GM12878 (cell line): ENCODE measurements at regions of chr13 and their contacts with region 1.

Region 1: GRCh38 chr13:29508130-29508875 is 87.2 kb downstream of the SLC7A1 start:
- DNase-seq: no peak
- ATAC-seq: peak; percentile 94
- H3K4me3 ChIP-seq: no peak overlapping the region
- H3K27ac ChIP-seq: no peak overlapping the region
- H3K4me1 ChIP-seq: no peaks in the 10 kb centered on the region
- H3K27me3 ChIP-seq: no peaks in the 10 kb centered on the region
- CTCF ChIP-seq: peak; percentile 86 to 98 (median 98)
- EP300 ChIP-seq: no peak
- POLR2A ChIP-seq: peak; percentile 67
- RAD21 ChIP-seq: peak; percentile 91

Region 2: GRCh38 chr13:29496240-29496712 is 12.0 kb before region 1 on chr13:
- CTCF ChIA-PET with region 1: interaction called, 31 read pairs
- POLR2A ChIA-PET with region 1: no interaction called
- RAD21 ChIA-PET with region 1: interaction called, 5 read pairs
- SMC1A ChIA-PET with region 1: interaction called, 3 read pairs
- in situ Hi-C with region 1: no loop called
- intact Hi-C with region 1: no loop called
- DNase-seq: no peak
- ATAC-seq: peak; percentile 83
- H3K4me3 ChIP-seq: no peak overlapping the region
- H3K27ac ChIP-seq: no peak overlapping the region
- H3K4me1 ChIP-seq: peaks cover 7% of the 10 kb centered on the region
- H3K27me3 ChIP-seq: no peaks in the 10 kb centered on the region
- CTCF ChIP-seq: no peak
- EP300 ChIP-seq: no peak
- POLR2A ChIP-seq: no peak
- RAD21 ChIP-seq: no peak

Region 3: GRCh38 chr13:29702912-29703351 is 194.6 kb after region 1 on chr13:
- CTCF ChIA-PET with region 1: interaction called, 80 read pairs
- POLR2A ChIA-PET with region 1: no interaction called
- RAD21 ChIA-PET with region 1: interaction called, 24 read pairs
- SMC1A ChIA-PET with region 1: interaction called, 17 read pairs
- in situ Hi-C with region 1: no loop called
- intact Hi-C with region 1: loop called (anchors 1 kb)
- DNase-seq: no peak
- ATAC-seq: no peak
- H3K4me3 ChIP-seq: no peak overlapping the region
- H3K27ac ChIP-seq: no peak overlapping the region
- H3K4me1 ChIP-seq: no peaks in the 10 kb centered on the region
- H3K27me3 ChIP-seq: peaks cover 2 to 5% of the 10 kb centered on the region in 2 experiments; a peak in 3 of 4 replicates
- CTCF ChIP-seq: no peak
- EP300 ChIP-seq: no peak
- POLR2A ChIP-seq: no peak
- RAD21 ChIP-seq: no peak

Region 4: DNA sequence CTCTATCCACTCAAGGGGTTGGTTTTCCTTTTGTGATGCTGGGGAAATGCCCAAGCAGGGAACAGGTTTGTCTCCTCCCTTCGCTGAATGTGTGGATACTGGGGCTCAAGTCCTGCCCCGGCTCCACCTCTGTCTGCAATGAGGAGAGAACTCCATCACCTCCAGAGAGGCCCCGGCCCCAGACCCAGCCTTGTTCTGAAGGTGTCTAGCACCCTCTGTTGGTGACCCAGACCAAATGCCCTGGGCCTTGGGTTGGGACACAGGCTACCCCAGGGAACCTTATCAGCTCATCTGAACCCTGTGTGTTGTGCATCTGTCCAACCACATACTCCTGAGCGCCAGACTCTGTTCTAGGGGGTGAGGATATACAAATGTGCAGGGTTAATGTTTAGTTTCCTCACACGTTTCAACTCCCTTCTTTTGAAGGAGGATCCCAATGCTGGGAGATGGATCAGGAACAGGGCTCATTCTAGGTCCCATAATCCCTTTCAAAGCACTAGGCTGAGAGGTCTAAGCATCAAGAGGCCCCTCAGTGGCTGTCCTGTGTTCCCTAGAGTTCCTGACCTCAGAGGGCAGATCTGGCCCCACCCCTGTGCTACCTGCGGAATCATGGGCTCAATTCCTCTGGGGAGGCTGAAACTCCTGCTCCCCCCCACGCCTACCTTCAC is 199.7 kb after region 1 on chr13:
- CTCF ChIA-PET with region 1: interaction called, 80 read pairs
- POLR2A ChIA-PET with region 1: no interaction called
- RAD21 ChIA-PET with region 1: interaction called, 24 read pairs
- SMC1A ChIA-PET with region 1: interaction called, 17 read pairs
- in situ Hi-C with region 1: loop called (anchors 5 kb)
- intact Hi-C with region 1: loop called (anchors 1 kb)
- DNase-seq: no peak
- ATAC-seq: peak; percentile 98
- H3K4me3 ChIP-seq: no peak overlapping the region
- H3K27ac ChIP-seq: no peak overlapping the region
- H3K4me1 ChIP-seq: no peaks in the 10 kb centered on the region
- H3K27me3 ChIP-seq: peaks cover 2% of the 10 kb centered on the region in 2 experiments
- CTCF ChIP-seq: peak; percentile 76 to 84 (median 78)
- EP300 ChIP-seq: no peak
- POLR2A ChIP-seq: no peak
- RAD21 ChIP-seq: peak; percentile 87

Region 5: DNA sequence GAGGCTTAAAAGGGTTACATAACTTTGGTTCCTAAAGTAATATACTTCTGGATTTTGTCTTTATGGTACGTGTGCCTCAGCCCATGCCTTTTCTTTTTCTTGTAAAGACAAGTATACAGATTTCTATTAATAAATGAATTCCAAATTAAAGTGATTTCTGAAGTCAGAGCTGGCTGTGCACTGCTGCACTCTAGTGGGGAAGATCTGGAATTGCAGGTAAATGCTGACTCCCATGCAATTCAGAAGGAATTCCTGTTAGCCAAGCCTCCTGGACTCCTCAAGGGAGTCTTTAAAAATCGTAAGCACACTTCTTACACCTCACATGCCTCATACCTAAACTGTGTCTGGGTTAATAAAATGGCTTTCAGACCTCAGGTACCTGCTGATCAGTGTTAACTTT is 205.5 kb after region 1 on chr13:
- CTCF ChIA-PET with region 1: interaction called, 80 read pairs
- POLR2A ChIA-PET with region 1: no interaction called
- RAD21 ChIA-PET with region 1: interaction called, 24 read pairs
- SMC1A ChIA-PET with region 1: interaction called, 8 read pairs
- in situ Hi-C with region 1: loop called (anchors 5 kb)
- intact Hi-C with region 1: no loop called
- DNase-seq: no peak
- ATAC-seq: no peak
- H3K4me3 ChIP-seq: no peak overlapping the region
- H3K27ac ChIP-seq: no peak overlapping the region
- H3K4me1 ChIP-seq: no peaks in the 10 kb centered on the region
- H3K27me3 ChIP-seq: no peaks in the 10 kb centered on the region; a peak in 2 of 4 replicates
- CTCF ChIP-seq: peak; percentile 18 to 69 (median 54); a peak in 5 of 6 replicates
- EP300 ChIP-seq: no peak
- POLR2A ChIP-seq: no peak
- RAD21 ChIP-seq: peak; percentile 45